Activated naive CD4-positive, alpha-beta T cell treated with anti-CD3 and anti-CD28 coated beads for 36 hours (primary cell): ENCODE measurements at regions of chr6 and their contacts with region 1.

Region 1: DNA sequence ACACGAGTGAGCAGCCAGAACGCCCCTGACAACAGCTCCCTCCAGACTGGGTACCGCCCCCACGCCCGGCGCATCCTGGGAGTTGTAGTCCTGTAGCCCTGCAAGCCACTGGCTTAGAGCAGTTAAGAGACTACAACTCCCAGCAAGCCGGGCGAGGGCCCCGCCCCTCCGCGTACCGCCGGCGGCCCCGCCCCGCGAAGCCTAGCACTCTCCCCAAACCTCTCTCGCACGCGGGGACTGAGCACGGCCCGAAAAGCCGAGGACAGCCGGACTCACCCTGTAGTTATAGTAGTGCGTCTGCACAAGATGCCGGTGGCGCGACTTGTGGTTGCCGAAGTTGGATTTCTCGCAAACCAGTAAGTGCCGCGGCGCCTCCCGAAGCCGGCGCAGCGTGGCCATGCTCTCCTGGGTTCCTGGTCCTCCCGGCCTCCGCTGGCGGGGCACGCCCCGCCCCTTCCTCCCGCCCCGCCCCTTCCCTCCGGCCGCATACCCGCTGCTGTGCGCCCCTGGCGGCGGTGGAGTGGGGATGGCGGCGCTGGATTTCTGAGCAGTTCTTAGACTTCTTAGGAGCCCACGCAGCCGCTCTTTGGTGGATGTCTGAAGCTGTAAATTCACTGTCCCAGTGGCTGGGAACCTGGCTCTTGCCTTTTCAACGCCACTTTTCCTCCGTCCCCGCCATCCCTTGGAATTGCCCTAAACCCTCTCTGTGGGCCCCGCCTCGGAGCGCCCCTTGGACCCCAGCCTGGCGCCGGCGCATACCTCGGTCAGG is at the start of gene RPP40:
- DNase-seq: peak; percentile 98
- H3K4me3 Mint-ChIP-seq: peak within 1 kb of the TSS; percentile 90
- H3K27ac Mint-ChIP-seq: peak within 1 kb of the TSS; percentile 91
- H3K4me1 Mint-ChIP-seq: peaks cover 11% of the 10 kb centered on the region
- H3K27me3 Mint-ChIP-seq: no peaks in the 10 kb centered on the region
- total RNA-seq, gene RPP40: 8.2 to 9.8 TPM

Region 2: GRCh38 chr6:3868544-3868943 is 1135.2 kb before region 1 on chr6:
- CTCF ChIA-PET with region 1: no interaction called
- intact Hi-C with region 1: no loop called
- DNase-seq: no peak
- H3K4me3 Mint-ChIP-seq: no peak overlapping the region
- H3K27ac Mint-ChIP-seq: peak overlapping the region; percentile 48
- H3K4me1 Mint-ChIP-seq: peaks cover 26% of the 10 kb centered on the region
- H3K27me3 Mint-ChIP-seq: peaks cover 2% of the 10 kb centered on the region

Region 3: DNA sequence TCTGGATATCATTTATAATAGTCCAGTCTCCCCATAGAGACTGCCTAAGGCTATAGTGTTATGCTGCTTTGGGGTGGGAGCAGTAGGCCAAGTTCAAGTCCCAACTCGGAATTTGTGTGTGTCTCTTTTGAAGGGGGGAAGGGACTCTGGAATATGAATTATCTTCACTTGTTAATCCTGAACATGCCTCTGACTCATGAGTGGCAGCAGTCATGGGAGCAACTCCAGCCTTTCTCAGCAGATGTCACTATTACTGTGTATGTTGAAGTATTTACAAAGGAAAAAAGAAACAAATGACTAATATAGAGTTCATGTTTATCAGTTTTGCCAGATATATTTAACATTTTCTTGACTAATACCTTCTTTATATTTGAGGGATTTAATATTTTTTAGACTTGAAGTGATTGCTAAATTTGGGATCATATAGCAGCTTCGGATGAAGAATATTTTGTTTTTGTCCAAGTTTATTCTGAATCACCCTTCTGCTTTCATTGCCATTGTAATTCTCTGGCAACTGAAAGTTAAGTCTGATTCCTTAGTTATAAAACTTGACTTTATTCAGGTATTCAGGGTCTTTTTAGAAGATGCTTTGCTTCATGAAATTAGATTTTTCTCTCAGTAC is 948.3 kb before region 1 on chr6:
- CTCF ChIA-PET with region 1: no interaction called
- intact Hi-C with region 1: loop called (anchors 10 kb)
- DNase-seq: peak; percentile 23
- H3K4me3 Mint-ChIP-seq: no peak overlapping the region
- H3K27ac Mint-ChIP-seq: peak overlapping the region; percentile 50
- H3K4me1 Mint-ChIP-seq: peaks cover 21% of the 10 kb centered on the region
- H3K27me3 Mint-ChIP-seq: no peaks in the 10 kb centered on the region

Region 4: GRCh38 chr6:4941782-4942672 is 61.8 kb before region 1 on chr6:
- CTCF ChIA-PET with region 1: no interaction called
- intact Hi-C with region 1: loop called (anchors 1 kb)
- DNase-seq: peak; percentile 58
- H3K4me3 Mint-ChIP-seq: no peak overlapping the region
- H3K27ac Mint-ChIP-seq: peak overlapping the region; percentile 36
- H3K4me1 Mint-ChIP-seq: peaks cover 32% of the 10 kb centered on the region
- H3K27me3 Mint-ChIP-seq: no peaks in the 10 kb centered on the region

Region 5: GRCh38 chr6:5030596-5031136 is 26.9 kb after region 1 on chr6:
- CTCF ChIA-PET with region 1: interaction called, 4 read pairs
- intact Hi-C with region 1: loop called (anchors 1 kb)
- DNase-seq: peak; percentile 91
- H3K4me3 Mint-ChIP-seq: no peak overlapping the region
- H3K27ac Mint-ChIP-seq: no peak overlapping the region
- H3K4me1 Mint-ChIP-seq: peaks cover 14% of the 10 kb centered on the region
- H3K27me3 Mint-ChIP-seq: peaks cover 3% of the 10 kb centered on the region

Region 6: GRCh38 chr6:5279891-5280338 is 276.1 kb after region 1 on chr6:
- CTCF ChIA-PET with region 1: no interaction called
- intact Hi-C with region 1: loop called (anchors 1 kb)
- DNase-seq: peak; percentile 69
- H3K4me3 Mint-ChIP-seq: no peak overlapping the region
- H3K27ac Mint-ChIP-seq: peak overlapping the region; percentile 83
- H3K4me1 Mint-ChIP-seq: peaks cover 37% of the 10 kb centered on the region
- H3K27me3 Mint-ChIP-seq: no peaks in the 10 kb centered on the region